Activated CD4-positive, alpha-beta memory T cell treated with anti-CD3 and anti-CD28 coated beads, Interleukin-2, amount 10 ng/mL, durations not matched to agents 7 days and 5 days (primary cell): ENCODE measurements at regions of chr11 and their contacts with region 1.

Region 1: DNA sequence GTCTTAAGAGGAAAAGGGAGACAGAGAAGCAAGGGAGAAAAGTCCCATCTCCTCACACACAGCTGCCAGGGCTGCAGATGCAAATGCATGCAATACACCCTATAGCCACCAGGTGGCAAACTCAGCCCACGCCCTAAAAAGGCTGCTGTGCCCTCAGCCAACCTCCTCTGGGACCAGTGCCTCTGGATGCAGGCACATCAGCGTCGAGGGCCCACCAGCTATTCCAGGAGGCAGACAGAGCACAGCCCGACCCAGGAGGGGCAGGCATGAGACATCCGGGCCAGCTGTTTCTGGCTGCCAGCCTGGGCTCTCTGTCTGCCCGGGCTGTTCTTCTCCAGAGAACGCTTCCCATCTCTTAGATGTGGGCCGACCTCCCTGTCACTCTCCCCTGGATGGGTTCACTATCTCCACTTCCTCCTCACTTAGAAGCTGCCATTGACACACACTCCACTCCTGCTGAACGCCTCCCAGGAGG is 39.7 kb downstream of the TPBGL start:
- DNase-seq: peak; percentile 82
- H3K4me3 Mint-ChIP-seq: no peak overlapping the region
- H3K27ac Mint-ChIP-seq: no peak overlapping the region
- H3K4me1 Mint-ChIP-seq: peaks cover 24% of the 10 kb centered on the region
- H3K27me3 Mint-ChIP-seq: no peaks in the 10 kb centered on the region

Region 2: DNA sequence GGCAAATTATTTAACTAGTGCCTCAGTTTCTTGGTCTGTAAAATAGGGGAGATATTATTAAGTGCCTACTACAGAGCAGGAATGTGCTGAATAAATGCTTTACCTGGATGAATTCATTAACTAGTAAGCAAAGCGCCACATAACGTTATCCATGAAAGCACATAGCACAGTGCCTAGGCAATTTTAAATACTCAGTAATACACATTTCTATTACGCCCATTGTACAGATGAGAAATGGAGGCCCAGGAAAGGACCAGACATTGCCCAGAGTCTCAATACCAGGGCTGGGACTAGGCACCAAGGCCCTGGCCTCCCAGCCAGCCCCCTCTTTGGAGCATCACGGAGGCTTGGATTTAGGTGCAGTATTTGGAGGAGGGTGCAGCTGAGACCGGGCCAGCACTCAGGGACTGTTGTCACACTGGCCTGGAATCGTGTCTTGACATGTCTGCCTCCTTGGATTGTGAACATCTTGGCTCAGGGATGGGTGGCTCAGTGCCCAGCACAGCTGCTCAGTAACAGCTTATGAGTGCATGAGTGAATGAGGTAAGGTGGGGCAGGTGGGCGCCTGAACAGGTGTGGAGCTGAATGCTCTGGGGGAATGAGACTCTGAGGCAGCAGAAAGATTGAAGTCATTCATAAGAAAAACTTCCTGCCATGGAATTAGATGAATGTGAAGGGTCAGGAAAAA is 81.8 kb before region 1 on chr11:
- CTCF ChIA-PET with region 1: no interaction called
- POLR2A ChIA-PET with region 1: no interaction called
- DNase-seq: no peak
- H3K4me3 Mint-ChIP-seq: no peak overlapping the region
- H3K27ac Mint-ChIP-seq: no peak overlapping the region
- H3K4me1 Mint-ChIP-seq: no peaks in the 10 kb centered on the region
- H3K27me3 Mint-ChIP-seq: peaks cover 14% of the 10 kb centered on the region

Region 3: GRCh38 chr11:75214411-75214821 is 65.8 kb before region 1 on chr11:
- CTCF ChIA-PET with region 1: no interaction called
- POLR2A ChIA-PET with region 1: no interaction called
- DNase-seq: peak; percentile 86
- H3K4me3 Mint-ChIP-seq: no peak overlapping the region
- H3K27ac Mint-ChIP-seq: no peak overlapping the region
- H3K4me1 Mint-ChIP-seq: peaks cover 4% of the 10 kb centered on the region
- H3K27me3 Mint-ChIP-seq: peaks cover 33% of the 10 kb centered on the region

Region 4: GRCh38 chr11:75342903-75343870 is 62.9 kb after region 1 on chr11:
- CTCF ChIA-PET with region 1: interaction called, 12 read pairs
- POLR2A ChIA-PET with region 1: interaction called, 6 read pairs
- DNase-seq: no peak
- H3K4me3 Mint-ChIP-seq: no peak overlapping the region
- H3K27ac Mint-ChIP-seq: no peak overlapping the region
- H3K4me1 Mint-ChIP-seq: peaks cover 64% of the 10 kb centered on the region
- H3K27me3 Mint-ChIP-seq: no peaks in the 10 kb centered on the region

Region 5: GRCh38 chr11:75380711-75381420 is 100.6 kb after region 1 on chr11:
- CTCF ChIA-PET with region 1: interaction called, 339 read pairs
- POLR2A ChIA-PET with region 1: interaction called, 13 read pairs
- DNase-seq: no peak
- H3K4me3 Mint-ChIP-seq: no peak overlapping the region
- H3K27ac Mint-ChIP-seq: no peak overlapping the region
- H3K4me1 Mint-ChIP-seq: peaks cover 19% of the 10 kb centered on the region
- H3K27me3 Mint-ChIP-seq: no peaks in the 10 kb centered on the region